Activated T-helper 1 cell treated with anti-CD3 and anti-CD28 coated beads, Interleukin-12 subunit alpha, Interleukin-12 subunit beta, Interleukin-2, Interleukin-4 antibody, amounts not matched to agents 30 ng/mL and 10 ng/mL and 1 ng/mL, durations not matched to agents 14 hours and 24 hours and 36 hours (primary cell): ENCODE measurements at regions of chr1 and their contacts with region 1.

Region 1: GRCh38 chr1:35882945-35883634 is at the start of gene AGO1:
- DNase-seq: peak; percentile 97
- H3K4me3 Mint-ChIP-seq: peak within 1 kb of the TSS; percentile 95
- H3K27ac Mint-ChIP-seq: peak within 1 kb of the TSS; percentile 64
- H3K4me1 Mint-ChIP-seq: peaks cover 48% of the 10 kb centered on the region
- H3K27me3 Mint-ChIP-seq: peaks cover 6% of the 10 kb centered on the region
- total RNA-seq, gene AGO1: 39.0 and 39.5 TPM in 2 replicates

Region 2: DNA sequence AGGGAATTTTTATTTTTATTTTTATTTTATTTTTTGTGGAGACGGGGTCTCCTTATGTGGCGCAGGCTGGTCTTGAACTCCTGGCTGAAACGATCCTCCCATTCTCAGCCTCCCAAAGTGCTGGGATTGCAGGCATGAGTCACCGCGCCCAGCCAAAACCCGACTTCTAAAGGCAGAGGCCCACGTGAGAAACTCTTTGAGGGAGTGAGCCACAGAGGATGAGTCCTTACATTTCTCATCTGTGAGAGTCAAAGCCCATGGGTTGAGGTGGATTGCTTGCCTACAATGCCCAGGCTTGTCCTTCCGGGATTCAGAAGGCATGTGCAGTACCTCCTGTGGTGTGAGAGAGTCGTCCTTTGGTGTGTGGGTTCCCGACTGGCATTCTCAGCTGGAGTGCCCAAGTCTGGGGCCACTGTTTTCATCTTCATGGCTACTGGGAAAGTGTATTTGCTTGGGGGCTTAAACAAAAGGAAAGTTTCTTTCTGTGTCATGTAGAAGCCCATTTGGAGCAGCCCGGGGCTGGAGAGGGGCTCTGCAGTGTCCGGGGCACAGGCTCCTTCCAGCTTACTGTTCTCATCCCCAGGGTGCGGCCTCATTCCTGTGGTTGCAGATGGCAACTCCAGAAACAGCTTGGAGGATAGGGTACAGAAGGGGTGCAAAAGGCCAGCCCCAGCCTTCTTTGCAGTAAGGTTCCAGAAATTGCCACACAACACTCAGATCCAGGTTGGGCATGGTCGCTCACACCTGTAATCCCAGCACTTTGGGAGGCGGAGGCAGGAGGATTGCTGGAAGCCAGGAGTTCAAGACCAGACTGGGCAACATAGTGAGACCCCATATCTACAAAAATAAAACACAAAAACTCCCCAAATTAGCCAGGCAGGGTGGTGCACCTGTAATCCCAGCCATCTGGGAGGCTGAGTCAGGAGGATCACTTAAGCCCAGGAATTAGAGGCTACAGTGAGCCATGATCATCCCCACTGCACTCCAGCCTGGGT is 629.0 kb after region 1 on chr1:
- intact Hi-C with region 1: no loop called
- DNase-seq: no peak
- H3K4me3 Mint-ChIP-seq: no peak overlapping the region
- H3K27ac Mint-ChIP-seq: no peak overlapping the region
- H3K4me1 Mint-ChIP-seq: no peaks in the 10 kb centered on the region
- H3K27me3 Mint-ChIP-seq: peaks cover 1% of the 10 kb centered on the region

Region 3: DNA sequence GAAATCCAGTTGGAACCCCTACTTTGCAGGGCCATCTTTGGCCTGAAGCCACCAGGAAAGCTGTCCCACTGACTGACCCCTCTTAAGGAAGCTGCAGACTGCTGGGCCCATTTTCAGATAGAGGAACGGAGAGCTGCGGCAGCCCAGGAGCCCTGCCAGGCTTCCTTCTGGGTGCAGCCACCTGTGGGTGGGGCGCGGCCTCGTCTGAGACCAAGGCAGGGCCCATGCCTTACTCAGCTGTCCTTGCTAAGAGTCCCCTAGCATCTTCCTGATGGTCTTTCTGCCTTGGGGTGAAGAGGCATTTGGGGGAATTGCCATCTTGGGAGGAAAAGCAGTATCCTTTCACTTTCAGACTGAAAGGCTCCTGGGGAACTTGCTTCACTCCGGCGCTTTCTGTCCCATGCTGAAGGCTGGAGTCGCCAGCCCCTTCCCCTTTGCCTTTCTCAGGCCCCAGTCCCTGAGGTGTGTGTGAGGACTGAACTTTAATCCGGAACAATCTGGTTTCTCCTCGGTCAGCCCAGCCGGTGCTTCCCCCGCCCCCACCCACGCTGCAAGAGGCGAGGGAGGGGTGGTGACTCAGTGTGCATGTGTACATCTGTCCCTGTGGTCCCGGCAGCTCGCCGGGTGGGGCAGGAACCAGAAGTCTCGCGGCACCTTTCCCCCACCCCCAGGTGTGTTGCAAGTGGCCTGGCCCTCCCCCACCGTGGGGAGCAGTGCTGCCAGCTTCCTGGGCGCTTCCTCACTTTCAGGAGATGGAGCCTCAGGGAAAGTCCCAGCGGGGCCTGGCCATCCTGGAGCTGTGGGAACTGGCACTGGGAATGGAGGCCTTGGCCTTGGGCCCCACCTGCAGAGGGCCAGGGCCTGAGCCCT is 1596.4 kb after region 1 on chr1:
- intact Hi-C with region 1: loop called (anchors 5 kb)
- DNase-seq: peak; percentile 84
- H3K4me3 Mint-ChIP-seq: peak overlapping the region; percentile 100
- H3K27ac Mint-ChIP-seq: peak overlapping the region; percentile 97
- H3K4me1 Mint-ChIP-seq: peaks cover 42% of the 10 kb centered on the region
- H3K27me3 Mint-ChIP-seq: peaks cover 2% of the 10 kb centered on the region